AG04450 (cell line): ENCODE measurements at regions of chr5 and their contacts with region 1.

Region 1: DNA sequence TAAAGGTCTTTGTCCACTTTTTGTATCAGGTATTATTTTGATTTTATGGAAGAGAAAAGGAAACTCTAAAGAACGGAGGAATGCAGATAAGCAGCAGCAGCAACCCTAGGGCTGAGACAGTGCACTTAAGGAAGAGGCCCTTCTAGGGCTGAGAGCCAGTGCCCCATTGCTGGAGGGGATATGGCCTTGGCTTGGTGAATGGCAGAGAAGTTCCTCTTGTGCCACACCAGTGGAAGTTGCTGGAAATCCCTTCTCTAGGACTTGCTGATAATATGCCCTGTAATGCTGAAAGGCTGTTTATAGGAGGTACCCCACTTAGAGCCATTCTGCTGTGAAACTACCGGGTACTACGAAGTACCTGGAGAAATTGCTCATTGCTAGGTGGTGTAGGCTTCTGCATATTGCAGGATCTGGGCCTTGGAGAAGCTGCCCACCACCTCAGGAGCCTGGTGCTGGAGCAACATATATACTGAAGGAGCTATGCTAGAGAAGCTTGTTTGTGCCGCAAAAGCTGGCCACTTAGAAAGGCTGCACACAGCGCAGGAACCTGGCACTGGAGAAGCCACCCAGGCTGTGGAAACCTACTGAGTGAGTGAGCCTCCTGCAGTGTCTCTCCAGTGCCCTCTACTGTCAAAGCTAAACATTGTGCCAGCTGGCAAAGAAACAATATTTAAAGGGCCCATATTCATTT is 9.6 kb upstream of the UBTD2 start:
- DNase-seq: no peak
- H3K4me3 ChIP-seq: no peak overlapping the region
- H3K27ac ChIP-seq: no peak overlapping the region
- H3K27me3 ChIP-seq: peaks cover 4% of the 10 kb centered on the region
- CTCF ChIP-seq: peak; percentile 89

Region 2: GRCh38 chr5:171330021-171330420 is 963.2 kb before region 1 on chr5:
- CTCF ChIA-PET with region 1: no interaction called
- POLR2A ChIA-PET with region 1: no interaction called
- DNase-seq: no peak
- H3K4me3 ChIP-seq: no peak overlapping the region
- H3K27ac ChIP-seq: no peak overlapping the region
- H3K27me3 ChIP-seq: peaks cover 32% of the 10 kb centered on the region
- CTCF ChIP-seq: no peak

Region 3: DNA sequence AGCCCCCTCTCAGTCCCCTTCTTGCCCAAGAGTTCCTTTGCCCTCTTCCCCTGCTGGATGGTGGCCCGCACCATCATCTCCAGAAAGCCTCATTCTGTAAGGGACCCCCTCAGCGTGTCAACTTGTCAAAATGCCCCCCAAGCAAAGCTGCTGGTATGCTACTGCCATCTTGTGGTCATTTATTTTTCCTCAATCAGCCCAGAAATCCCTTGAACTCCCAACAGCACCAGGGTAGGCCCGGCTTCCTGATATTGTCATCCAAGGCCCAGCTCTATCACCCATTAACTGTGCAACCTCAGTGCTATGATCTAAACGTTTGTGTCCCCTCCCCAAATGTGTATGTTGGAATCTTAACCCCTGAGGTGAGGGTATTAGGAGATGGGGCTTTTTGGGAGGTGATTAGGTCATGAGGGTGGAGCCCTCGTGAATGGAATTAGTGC is 233.5 kb before region 1 on chr5:
- CTCF ChIA-PET with region 1: interaction called, 12 read pairs
- POLR2A ChIA-PET with region 1: no interaction called
- DNase-seq: no peak
- H3K4me3 ChIP-seq: no peak overlapping the region
- H3K27ac ChIP-seq: no peak overlapping the region
- H3K27me3 ChIP-seq: no peaks in the 10 kb centered on the region
- CTCF ChIP-seq: peak; percentile 61

Region 4: GRCh38 chr5:172106511-172107356 is 186.5 kb before region 1 on chr5:
- CTCF ChIA-PET with region 1: interaction called, 11 read pairs
- POLR2A ChIA-PET with region 1: no interaction called
- DNase-seq: no peak
- H3K4me3 ChIP-seq: peak overlapping the region; percentile 21; the same call in 1 of the 2 replicates
- H3K27ac ChIP-seq: peak overlapping the region; percentile 68
- H3K27me3 ChIP-seq: no peaks in the 10 kb centered on the region
- CTCF ChIP-seq: peak; percentile 90

Region 5: DNA sequence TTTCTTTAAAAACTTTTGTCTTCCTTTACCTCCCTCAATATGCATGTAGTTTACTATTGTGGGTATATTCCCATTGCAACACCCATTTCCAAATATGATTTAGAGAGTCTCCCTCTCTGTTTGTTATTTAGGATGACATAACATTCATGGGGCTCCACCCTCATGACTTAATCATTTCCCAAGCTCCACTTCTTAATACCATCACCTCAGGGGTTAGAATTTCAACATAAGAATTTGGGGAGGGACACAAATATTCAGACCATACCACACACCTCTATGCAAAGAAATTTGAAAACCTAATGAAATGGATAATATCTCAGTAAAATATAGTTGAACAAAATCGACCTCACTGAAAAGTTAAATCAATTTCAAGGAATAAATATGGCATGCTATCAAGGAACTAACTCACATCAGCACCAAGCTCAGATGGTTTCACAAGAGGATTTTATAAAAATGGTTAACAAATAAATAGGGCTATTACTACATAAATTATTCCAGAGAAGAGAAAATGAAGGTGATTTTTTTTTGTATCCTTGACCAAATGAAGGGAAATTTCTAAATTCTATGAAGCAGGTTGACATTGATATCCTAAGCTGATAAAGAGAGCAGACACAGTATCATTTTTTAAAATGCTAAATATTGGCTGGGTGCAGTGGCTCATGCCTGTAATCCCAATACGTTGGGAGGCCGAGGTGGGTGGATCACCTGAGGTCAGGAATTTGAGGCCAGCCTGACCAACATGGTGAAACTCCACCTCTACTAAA is 10.6 kb after region 1 on chr5:
- CTCF ChIA-PET with region 1: interaction called, 17 read pairs
- POLR2A ChIA-PET with region 1: interaction called, 3 read pairs
- DNase-seq: no peak
- H3K4me3 ChIP-seq: no peak overlapping the region
- H3K27ac ChIP-seq: no peak overlapping the region
- H3K27me3 ChIP-seq: no peaks in the 10 kb centered on the region
- CTCF ChIP-seq: no peak

Region 6: DNA sequence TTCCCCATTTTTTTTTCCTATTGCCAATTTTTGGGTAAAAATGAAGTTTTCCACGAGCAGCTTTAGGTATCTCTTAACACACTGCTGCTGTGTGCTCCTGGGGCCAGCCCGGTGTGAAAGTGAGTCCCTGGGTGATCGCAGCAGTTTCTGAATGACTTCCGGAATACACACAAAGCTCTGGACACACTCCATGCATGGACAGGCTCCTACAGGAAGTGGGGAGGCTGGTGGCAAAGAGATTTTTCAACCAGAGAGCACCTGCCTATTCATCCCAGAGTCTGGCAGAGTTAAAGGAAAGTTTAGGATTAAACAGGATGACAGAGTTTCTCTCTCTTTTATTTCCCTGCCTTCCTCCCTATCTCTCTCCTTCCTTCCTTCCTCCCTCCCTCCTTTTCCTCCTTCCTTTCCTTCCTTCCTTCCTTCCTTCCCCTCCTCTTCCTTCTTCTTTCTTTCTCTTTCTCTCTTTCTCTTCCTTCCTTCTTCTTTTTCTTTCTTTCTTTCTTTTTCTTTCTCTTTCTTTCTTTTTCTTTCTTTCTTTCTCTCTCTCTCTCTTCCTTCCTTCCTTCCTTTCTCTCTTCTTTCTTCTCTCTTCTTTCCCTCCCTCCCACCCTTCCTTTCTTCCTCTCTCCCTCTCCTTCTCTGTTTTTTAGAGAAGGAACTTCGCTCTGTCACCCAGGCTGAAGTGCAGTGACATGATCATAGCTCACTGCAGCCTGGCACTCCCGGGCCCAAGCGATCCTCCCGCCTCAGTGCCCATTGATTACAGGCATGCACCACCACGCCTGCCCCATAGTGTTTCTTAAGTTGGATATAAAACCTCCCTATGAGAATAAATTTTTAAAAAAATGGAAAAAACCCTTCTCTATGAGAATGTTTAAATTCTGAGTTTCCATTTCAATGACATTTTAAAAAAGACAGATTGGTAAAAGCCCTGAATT is 29.1 kb after region 1 on chr5:
- CTCF ChIA-PET with region 1: no interaction called
- POLR2A ChIA-PET with region 1: no interaction called
- DNase-seq: no peak
- H3K4me3 ChIP-seq: no peak overlapping the region
- H3K27ac ChIP-seq: no peak overlapping the region
- H3K27me3 ChIP-seq: no peaks in the 10 kb centered on the region
- CTCF ChIP-seq: no peak

Region 7: DNA sequence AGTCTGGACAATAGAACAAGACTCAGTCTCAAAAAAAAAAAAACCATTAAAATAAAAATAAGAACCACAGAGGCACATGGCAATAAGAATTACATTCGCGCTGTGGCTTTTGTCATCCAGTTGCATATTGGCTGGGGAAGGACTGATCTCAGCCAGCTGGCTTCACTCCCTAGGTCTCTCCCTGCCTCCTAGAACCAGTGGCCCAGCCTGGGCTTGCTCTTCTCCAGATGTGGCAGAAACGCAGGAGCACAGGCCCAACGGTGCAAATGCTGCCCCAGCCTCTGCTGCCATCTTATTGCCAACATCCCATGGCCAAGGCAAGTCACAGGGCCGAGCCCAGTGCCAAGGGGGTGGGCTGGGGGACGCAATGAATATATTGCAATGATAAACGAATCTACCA is 904.9 kb after region 1 on chr5:
- CTCF ChIA-PET with region 1: no interaction called
- POLR2A ChIA-PET with region 1: no interaction called
- DNase-seq: no peak
- H3K4me3 ChIP-seq: no peak overlapping the region
- H3K27ac ChIP-seq: no peak overlapping the region
- H3K27me3 ChIP-seq: peaks cover 41% of the 10 kb centered on the region
- CTCF ChIP-seq: no peak